SK-N-SH (cell line): ENCODE measurements at regions of chr1 and their contacts with region 1.

Region 1: DNA sequence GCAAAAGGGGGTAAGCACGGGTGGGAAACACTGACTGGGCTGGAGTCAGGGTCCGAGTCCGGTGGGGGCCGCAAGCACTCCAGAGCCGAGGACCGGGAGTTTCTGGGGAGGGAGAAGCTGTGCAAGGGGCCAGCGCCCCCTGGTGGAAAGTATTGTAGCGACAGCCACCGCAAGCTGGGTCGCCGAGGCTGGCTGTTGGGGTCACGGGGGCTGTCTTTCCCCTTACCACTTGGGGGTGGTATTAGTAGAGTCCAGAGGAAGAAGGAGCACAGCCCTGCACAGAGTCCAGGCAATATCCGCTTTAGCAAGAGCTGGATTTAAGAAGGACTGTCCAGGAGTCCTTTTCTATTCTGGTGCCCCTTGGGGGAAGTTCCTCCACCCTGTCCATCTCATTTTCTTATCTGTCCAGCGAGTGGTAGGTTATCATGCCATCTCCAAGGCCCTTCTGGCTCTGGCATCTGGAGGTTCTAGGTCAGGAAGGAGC is 17.9 kb upstream of the ETV3 start:
- DNase-seq: peak; percentile 83
- H3K4me3 ChIP-seq: peak overlapping the region in 1 of 2 experiments; percentile 20; a peak in 2 of 4 replicates
- H3K27ac ChIP-seq: no peak overlapping the region
- H3K4me1 ChIP-seq: peaks cover 15 to 34% of the 10 kb centered on the region in 2 experiments; a peak in 3 of 4 replicates
- H3K27me3 ChIP-seq: no peaks in the 10 kb centered on the region
- CTCF ChIP-seq: peak; percentile 95
- EP300 ChIP-seq: no peak
- RAD21 ChIP-seq: peak; percentile 85

Region 2: GRCh38 chr1:156961709-156962108 is 194.4 kb before region 1 on chr1:
- CTCF ChIA-PET with region 1: no interaction called
- POLR2A ChIA-PET with region 1: no interaction called
- DNase-seq: no peak
- H3K4me3 ChIP-seq: no peak overlapping the region
- H3K27ac ChIP-seq: no peak overlapping the region
- H3K4me1 ChIP-seq: peaks cover 0 to 7% of the 10 kb centered on the region in 2 experiments; a peak in 2 of 4 replicates
- H3K27me3 ChIP-seq: no peaks in the 10 kb centered on the region
- CTCF ChIP-seq: peak; percentile 40
- EP300 ChIP-seq: no peak
- RAD21 ChIP-seq: peak; percentile 49

Region 3: DNA sequence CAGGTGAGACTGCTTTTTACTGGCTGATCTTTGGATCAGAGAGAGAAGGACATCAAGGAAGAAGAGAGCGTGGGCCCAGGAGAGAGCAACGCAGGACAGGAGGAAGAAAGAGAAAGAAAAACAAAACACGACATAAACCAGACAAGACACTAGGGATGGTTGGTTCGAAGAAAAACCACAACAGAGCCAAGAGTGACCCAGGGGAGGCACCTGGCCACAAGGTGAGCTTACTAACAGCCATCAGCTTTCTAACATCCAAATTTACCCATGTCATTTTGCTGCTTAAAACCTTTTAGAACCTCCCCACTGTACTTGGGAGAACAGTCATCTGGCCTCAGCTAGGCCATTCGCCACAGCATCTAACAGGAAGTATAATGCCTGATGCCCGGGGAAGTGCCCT is 168.4 kb before region 1 on chr1:
- CTCF ChIA-PET with region 1: no interaction called
- POLR2A ChIA-PET with region 1: no interaction called
- DNase-seq: no peak
- H3K4me3 ChIP-seq: no peak overlapping the region
- H3K27ac ChIP-seq: no peak overlapping the region
- H3K4me1 ChIP-seq: no peaks in the 10 kb centered on the region
- H3K27me3 ChIP-seq: no peaks in the 10 kb centered on the region
- CTCF ChIP-seq: no peak
- EP300 ChIP-seq: no peak
- RAD21 ChIP-seq: no peak

Region 4: GRCh38 chr1:157090196-157090647 is 65.9 kb before region 1 on chr1:
- CTCF ChIA-PET with region 1: interaction called, 586 read pairs
- POLR2A ChIA-PET with region 1: interaction called, 13 read pairs
- DNase-seq: peak; percentile 88
- H3K4me3 ChIP-seq: peak overlapping the region in 1 of 2 experiments; percentile 22; a peak in 1 of 4 replicates
- H3K27ac ChIP-seq: no peak overlapping the region
- H3K4me1 ChIP-seq: peaks cover 6 to 7% of the 10 kb centered on the region in 2 experiments; a peak in 2 of 4 replicates
- H3K27me3 ChIP-seq: no peaks in the 10 kb centered on the region
- CTCF ChIP-seq: peak; percentile 94
- EP300 ChIP-seq: no peak
- RAD21 ChIP-seq: peak; percentile 97

Region 5: DNA sequence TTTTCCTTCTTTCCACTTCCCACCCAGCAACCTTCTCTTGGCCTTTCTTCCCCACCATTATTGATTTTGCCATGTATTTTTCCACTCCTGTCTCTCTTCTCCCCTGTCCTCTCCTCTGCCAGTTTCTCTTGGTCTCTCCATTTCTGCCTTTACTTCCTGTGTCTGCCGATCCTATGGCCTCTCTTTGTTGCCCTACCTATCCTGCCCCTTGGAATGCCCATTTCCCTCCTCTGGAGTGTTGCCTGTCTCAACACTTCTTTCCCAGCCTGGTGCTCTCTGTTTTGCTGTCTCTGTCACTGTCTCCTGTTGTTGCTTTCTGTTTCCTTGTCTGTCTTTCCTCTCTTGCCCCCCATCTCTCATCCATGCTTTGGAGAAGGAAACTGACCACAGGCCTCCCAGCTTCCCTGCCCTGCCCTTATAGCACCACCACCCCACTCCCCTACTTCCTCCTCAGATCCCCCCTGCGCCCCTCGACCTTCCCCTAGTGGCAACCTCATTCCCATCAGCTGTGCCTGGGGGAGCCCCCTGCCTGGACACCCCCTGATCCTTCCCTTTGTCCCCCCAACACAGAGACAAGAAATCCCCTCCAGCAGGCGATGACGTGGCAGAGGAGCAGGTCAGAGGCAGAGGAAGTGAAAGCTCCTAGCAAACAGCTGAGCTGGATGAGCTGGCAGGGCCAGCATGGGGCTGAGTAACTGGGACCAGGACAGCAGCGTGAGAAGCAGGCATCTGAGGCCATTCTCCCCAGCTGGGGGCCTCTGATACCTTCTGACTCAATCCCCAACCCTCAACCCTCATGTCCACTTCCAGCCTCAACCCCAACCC is 49.9 kb before region 1 on chr1:
- CTCF ChIA-PET with region 1: interaction called, 17 read pairs
- POLR2A ChIA-PET with region 1: no interaction called
- DNase-seq: no peak
- H3K4me3 ChIP-seq: no peak overlapping the region
- H3K27ac ChIP-seq: peak overlapping the region in 1 of 2 experiments; percentile 47; a peak in 2 of 4 replicates
- H3K4me1 ChIP-seq: peaks cover 0 to 17% of the 10 kb centered on the region in 2 experiments; a peak in 1 of 4 replicates
- H3K27me3 ChIP-seq: no peaks in the 10 kb centered on the region
- CTCF ChIP-seq: no peak
- EP300 ChIP-seq: no peak
- RAD21 ChIP-seq: no peak

Region 6: DNA sequence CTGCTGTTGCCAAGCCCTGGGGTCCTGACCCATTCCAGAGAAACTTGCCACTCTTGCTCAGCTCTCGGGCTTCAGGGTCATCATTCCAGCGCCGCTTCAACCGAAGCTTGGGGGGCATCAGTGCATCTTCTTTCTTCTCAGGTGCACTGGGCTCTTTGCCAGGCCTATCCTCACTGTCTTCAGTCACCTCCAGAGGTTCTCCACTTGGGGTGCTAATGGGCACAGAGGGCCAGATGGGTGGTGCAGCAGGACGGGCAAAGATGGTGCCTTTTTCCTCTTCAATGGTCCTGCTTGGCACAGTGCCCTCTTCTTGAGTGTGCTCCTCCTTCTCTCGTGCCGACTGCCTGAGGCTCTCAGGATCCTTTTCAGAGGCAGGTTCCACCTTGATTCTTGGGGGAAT is 31.2 kb before region 1 on chr1:
- CTCF ChIA-PET with region 1: interaction called, 24 read pairs
- POLR2A ChIA-PET with region 1: no interaction called
- DNase-seq: no peak
- H3K4me3 ChIP-seq: no peak overlapping the region
- H3K27ac ChIP-seq: no peak overlapping the region
- H3K4me1 ChIP-seq: no peaks in the 10 kb centered on the region
- H3K27me3 ChIP-seq: no peaks in the 10 kb centered on the region
- CTCF ChIP-seq: no peak; the same call in 1 of the 2 replicates
- EP300 ChIP-seq: no peak
- RAD21 ChIP-seq: no peak

Region 7: DNA sequence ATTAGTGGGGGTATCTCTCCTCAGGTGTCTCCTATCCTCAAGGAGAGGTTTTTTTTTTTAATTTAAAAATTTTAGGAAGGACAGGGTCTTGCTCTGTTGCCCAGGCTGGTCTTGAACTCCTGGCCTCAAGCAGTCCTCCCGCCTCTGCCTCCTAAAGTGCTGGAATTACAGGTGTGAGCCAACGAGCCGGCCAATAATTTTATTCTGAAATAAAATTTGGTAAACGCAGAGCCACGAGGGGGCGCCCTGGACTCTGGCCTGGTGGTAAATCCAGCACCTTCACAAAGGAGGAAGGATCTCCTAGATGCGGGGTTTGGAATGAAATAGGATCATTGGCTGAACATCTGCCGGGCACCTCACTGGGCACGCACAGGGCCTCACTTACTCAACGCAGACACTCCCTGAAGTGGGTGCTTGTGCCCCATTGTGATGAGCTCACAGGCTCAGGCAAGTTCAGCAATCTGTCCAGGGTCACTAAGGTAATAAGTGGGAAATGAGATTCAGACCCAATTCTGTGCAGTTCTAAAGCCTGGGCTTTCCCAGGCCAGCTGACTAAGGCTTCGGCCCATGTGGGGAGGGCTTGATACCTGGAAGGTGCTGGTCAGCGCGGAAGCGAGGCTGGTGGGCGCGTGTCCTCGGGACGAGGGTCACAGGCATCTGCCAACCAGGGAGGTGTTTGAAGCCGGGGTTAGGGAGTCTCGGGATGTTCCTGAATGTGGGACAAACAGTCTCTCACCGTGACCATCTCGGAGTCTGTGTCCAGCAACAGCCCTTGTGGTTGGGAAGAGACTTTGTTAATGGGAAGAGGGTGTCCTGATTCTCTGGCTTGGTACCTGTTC is 14.8 kb after region 1 on chr1:
- CTCF ChIA-PET with region 1: interaction called, 12 read pairs
- POLR2A ChIA-PET with region 1: no interaction called
- DNase-seq: no peak
- H3K4me3 ChIP-seq: no peak overlapping the region; a peak in 1 of 4 replicates
- H3K27ac ChIP-seq: no peak overlapping the region
- H3K4me1 ChIP-seq: peaks cover 0 to 7% of the 10 kb centered on the region in 2 experiments; a peak in 1 of 4 replicates
- H3K27me3 ChIP-seq: peaks cover 37% of the 10 kb centered on the region; the same call in 1 of the 2 replicates
- CTCF ChIP-seq: peak; percentile 67
- EP300 ChIP-seq: no peak
- RAD21 ChIP-seq: no peak